Activated naive CD4-positive, alpha-beta T cell treated with anti-CD3 and anti-CD28 coated beads for 36 hours (primary cell): ENCODE measurements at regions of chr1 and their contacts with region 1.

Region 1: GRCh38 chr1:152047730-152048402 is 11.1 kb upstream of the S100A11 start:
- DNase-seq: peak; percentile 94
- H3K4me3 Mint-ChIP-seq: peak overlapping the region; percentile 67
- H3K27ac Mint-ChIP-seq: peak overlapping the region; percentile 98
- H3K4me1 Mint-ChIP-seq: peaks cover 19% of the 10 kb centered on the region
- H3K27me3 Mint-ChIP-seq: peaks cover 2% of the 10 kb centered on the region

Region 2: GRCh38 chr1:151198255-151199127 is 849.4 kb before region 1 on chr1 and contains the start of gene PIP5K1A:
- CTCF ChIA-PET with region 1: no interaction called
- intact Hi-C with region 1: loop called (anchors 5 kb)
- DNase-seq: peak; percentile 99
- H3K4me3 Mint-ChIP-seq: peak within 1 kb of the TSS; percentile 99
- H3K27ac Mint-ChIP-seq: peak within 1 kb of the TSS; percentile 99
- H3K4me1 Mint-ChIP-seq: peaks cover 39% of the 10 kb centered on the region
- H3K27me3 Mint-ChIP-seq: no peaks in the 10 kb centered on the region
- total RNA-seq, gene PIP5K1A: 72.6 to 82.5 TPM

Region 3: GRCh38 chr1:152061952-152062351 is 14.1 kb after region 1 on chr1:
- CTCF ChIA-PET with region 1: interaction called, 12 read pairs
- intact Hi-C with region 1: no loop called
- DNase-seq: no peak
- H3K4me3 Mint-ChIP-seq: no peak overlapping the region
- H3K27ac Mint-ChIP-seq: no peak overlapping the region
- H3K4me1 Mint-ChIP-seq: no peaks in the 10 kb centered on the region
- H3K27me3 Mint-ChIP-seq: peaks cover 11% of the 10 kb centered on the region

Region 4: GRCh38 chr1:152141974-152142584 is 94.2 kb after region 1 on chr1:
- CTCF ChIA-PET with region 1: interaction called, 9 read pairs
- intact Hi-C with region 1: loop called (anchors 1 kb)
- DNase-seq: peak; percentile 62
- H3K4me3 Mint-ChIP-seq: no peak overlapping the region
- H3K27ac Mint-ChIP-seq: no peak overlapping the region
- H3K4me1 Mint-ChIP-seq: peaks cover 9% of the 10 kb centered on the region
- H3K27me3 Mint-ChIP-seq: peaks cover 50% of the 10 kb centered on the region

Region 5: GRCh38 chr1:152189657-152190442 is 142.0 kb after region 1 on chr1:
- CTCF ChIA-PET with region 1: interaction called, 266 read pairs
- intact Hi-C with region 1: loop called (anchors 1 kb)
- DNase-seq: peak; percentile 84
- H3K4me3 Mint-ChIP-seq: peak overlapping the region; percentile 66
- H3K27ac Mint-ChIP-seq: no peak overlapping the region
- H3K4me1 Mint-ChIP-seq: peaks cover 6% of the 10 kb centered on the region
- H3K27me3 Mint-ChIP-seq: peaks cover 4% of the 10 kb centered on the region

Region 6: GRCh38 chr1:152252157-152252556 is 204.3 kb after region 1 on chr1:
- CTCF ChIA-PET with region 1: no interaction called
- intact Hi-C with region 1: no loop called
- DNase-seq: no peak
- H3K4me3 Mint-ChIP-seq: no peak overlapping the region
- H3K27ac Mint-ChIP-seq: no peak overlapping the region
- H3K4me1 Mint-ChIP-seq: no peaks in the 10 kb centered on the region
- H3K27me3 Mint-ChIP-seq: peaks cover 4% of the 10 kb centered on the region

Region 7: GRCh38 chr1:152440635-152441471 is 393.0 kb after region 1 on chr1:
- CTCF ChIA-PET with region 1: no interaction called
- intact Hi-C with region 1: loop called (anchors 5 kb)
- DNase-seq: peak; percentile 82
- H3K4me3 Mint-ChIP-seq: no peak overlapping the region
- H3K27ac Mint-ChIP-seq: no peak overlapping the region
- H3K4me1 Mint-ChIP-seq: no peaks in the 10 kb centered on the region
- H3K27me3 Mint-ChIP-seq: peaks cover 17% of the 10 kb centered on the region